CD4-positive, alpha-beta memory T cell (primary cell): ENCODE measurements at regions of chr2 and their contacts with region 1.

Region 1: DNA sequence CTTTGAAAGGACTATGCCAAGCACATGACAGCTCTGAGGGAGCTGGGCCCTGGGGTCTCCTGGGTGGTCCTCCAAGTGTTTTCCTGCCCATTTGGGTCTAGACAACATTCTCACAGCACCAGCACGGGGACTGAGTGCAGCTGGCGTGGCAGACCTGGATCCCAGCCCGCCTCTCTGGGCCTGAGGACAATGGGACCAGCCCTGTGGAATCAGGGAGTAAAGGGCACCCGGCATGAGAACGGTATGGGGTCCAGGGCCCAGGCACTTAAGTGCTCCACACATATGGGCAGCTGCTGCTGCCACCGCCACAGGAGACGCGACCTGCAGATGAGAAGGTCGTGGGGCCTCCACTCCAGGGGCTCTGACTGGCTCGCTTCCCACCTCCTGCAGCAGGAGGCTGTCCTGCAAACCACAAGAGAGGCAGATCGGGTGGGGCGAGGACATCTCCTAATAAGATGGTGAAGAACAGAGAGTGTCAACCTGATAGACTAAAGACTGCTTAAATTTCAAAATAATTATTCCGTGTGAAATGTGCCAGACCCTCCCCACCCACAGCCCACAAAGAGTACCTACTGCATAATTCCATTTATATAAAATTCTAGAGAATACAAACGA is 46.3 kb downstream of the FAM178B start:
- DNase-seq: no peak
- H3K4me3 ChIP-seq: no peak overlapping the region
- H3K4me3 Mint-ChIP-seq: peak overlapping the region in 5 of 8 donors; percentile 17 to 82 (median 67)
- H3K27ac ChIP-seq: no peak overlapping the region
- H3K27ac Mint-ChIP-seq: peak overlapping the region in 1 of 7 donors; percentile 37
- H3K4me1 ChIP-seq: peaks cover 26% of the 10 kb centered on the region
- H3K4me1 Mint-ChIP-seq: peaks cover 24 to 42% (median 27%) of the 10 kb centered on the region in 4 donors
- H3K27me3 ChIP-seq: no peaks in the 10 kb centered on the region
- H3K27me3 Mint-ChIP-seq: peaks cover 0 to 1% of the 10 kb centered on the region in 2 donors

Region 2: GRCh38 chr2:96396095-96396494 is 544.0 kb before region 1 on chr2:
- CTCF ChIA-PET with region 1: no interaction called
- POLR2A ChIA-PET with region 1: no interaction called
- intact Hi-C with region 1: no loop called
- DNase-seq: no peak
- H3K4me3 ChIP-seq: no peak overlapping the region
- H3K4me3 Mint-ChIP-seq: no peak overlapping the region
- H3K27ac ChIP-seq: no peak overlapping the region
- H3K27ac Mint-ChIP-seq: no peak overlapping the region
- H3K4me1 ChIP-seq: no peaks in the 10 kb centered on the region
- H3K4me1 Mint-ChIP-seq: peaks cover 0 to 5% (median 0%) of the 10 kb centered on the region in 4 donors
- H3K27me3 ChIP-seq: no peaks in the 10 kb centered on the region
- H3K27me3 Mint-ChIP-seq: peaks cover 0 to 9% of the 10 kb centered on the region in 2 donors

Region 3: GRCh38 chr2:96839293-96839874 is 100.7 kb before region 1 on chr2:
- CTCF ChIA-PET with region 1: no interaction called
- POLR2A ChIA-PET with region 1: no interaction called
- intact Hi-C with region 1: no loop called
- DNase-seq: peak; percentile 84 to 89 (median 85)
- H3K4me3 ChIP-seq: peak overlapping the region in 1 of 2 donors; percentile 33
- H3K4me3 Mint-ChIP-seq: peak overlapping the region; percentile 45 to 80 (median 73)
- H3K27ac ChIP-seq: peak overlapping the region; percentile 55
- H3K27ac Mint-ChIP-seq: peak overlapping the region; percentile 74 to 95 (median 89)
- H3K4me1 ChIP-seq: peaks cover 22% of the 10 kb centered on the region
- H3K4me1 Mint-ChIP-seq: peaks cover 7 to 29% (median 19%) of the 10 kb centered on the region in 4 donors
- H3K27me3 ChIP-seq: no peaks in the 10 kb centered on the region
- H3K27me3 Mint-ChIP-seq: no peaks in the 10 kb centered on the region

Region 4: GRCh38 chr2:96888072-96889011 is 51.8 kb before region 1 on chr2:
- CTCF ChIA-PET with region 1: interaction called, 3 read pairs
- POLR2A ChIA-PET with region 1: interaction called, 10 read pairs
- intact Hi-C with region 1: no loop called
- DNase-seq: no peak
- H3K4me3 ChIP-seq: no peak overlapping the region
- H3K4me3 Mint-ChIP-seq: no peak overlapping the region
- H3K27ac ChIP-seq: no peak overlapping the region
- H3K27ac Mint-ChIP-seq: peak overlapping the region in 4 of 7 donors; percentile 50 to 86 (median 78)
- H3K4me1 ChIP-seq: peaks cover 30% of the 10 kb centered on the region
- H3K4me1 Mint-ChIP-seq: peaks cover 30 to 46% (median 36%) of the 10 kb centered on the region in 4 donors
- H3K27me3 ChIP-seq: no peaks in the 10 kb centered on the region
- H3K27me3 Mint-ChIP-seq: no peaks in the 10 kb centered on the region

Region 5: DNA sequence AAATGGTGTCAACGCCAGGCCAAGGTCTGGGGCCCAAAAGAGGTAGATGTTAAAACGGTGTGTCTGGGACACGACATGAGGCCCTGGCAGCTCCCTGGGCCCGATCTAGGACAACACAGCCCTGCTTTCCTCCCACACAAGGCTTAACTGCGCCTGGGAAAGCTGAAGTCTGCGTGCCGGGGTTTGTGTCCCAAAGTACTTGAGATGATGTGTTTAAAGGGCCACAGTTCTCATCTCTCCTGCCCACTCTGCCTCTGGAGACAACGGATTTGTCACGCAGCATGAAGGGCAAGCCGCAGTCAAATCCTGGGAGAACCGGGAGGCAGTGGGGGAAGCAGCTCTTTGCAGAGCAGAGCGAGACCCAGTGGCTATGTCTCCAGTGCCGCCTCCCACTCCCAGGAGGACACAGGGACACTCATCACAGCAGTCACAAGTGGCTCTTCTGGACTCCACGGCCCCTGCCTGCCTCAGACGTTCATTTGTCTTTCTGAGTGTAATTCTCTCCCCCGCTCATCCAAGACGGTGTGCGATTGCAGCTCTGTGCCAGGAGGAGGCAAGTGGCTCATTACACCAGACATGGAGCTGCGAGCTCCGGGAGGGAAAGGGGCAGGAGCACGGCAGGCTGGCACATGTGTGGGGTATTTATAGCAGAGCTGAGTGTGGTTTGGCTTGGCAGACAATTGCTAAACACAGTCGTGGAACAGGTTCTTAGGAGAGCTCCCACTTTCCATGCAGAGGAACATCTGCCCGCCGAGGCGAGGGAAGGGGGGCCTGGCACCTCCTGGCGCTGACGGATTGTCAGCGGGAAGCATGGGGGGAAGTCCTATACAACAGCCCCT is 12.5 kb before region 1 on chr2:
- CTCF ChIA-PET with region 1: interaction called, 9 read pairs
- POLR2A ChIA-PET with region 1: interaction called, 16 read pairs
- intact Hi-C with region 1: no loop called
- DNase-seq: no peak
- H3K4me3 ChIP-seq: no peak overlapping the region
- H3K4me3 Mint-ChIP-seq: no peak overlapping the region
- H3K27ac ChIP-seq: no peak overlapping the region
- H3K27ac Mint-ChIP-seq: no peak overlapping the region
- H3K4me1 ChIP-seq: peaks cover 27% of the 10 kb centered on the region
- H3K4me1 Mint-ChIP-seq: peaks cover 17 to 40% (median 24%) of the 10 kb centered on the region in 4 donors
- H3K27me3 ChIP-seq: no peaks in the 10 kb centered on the region
- H3K27me3 Mint-ChIP-seq: peaks cover 0 to 1% of the 10 kb centered on the region in 2 donors